ENCODE measurements at regions of chr7 and their contacts with region 1.

Region 1: GRCh38 chr7:44787041-44787440 is 9.4 kb upstream of the PPIA start:
- DNase-seq: no peak
- H3K4me3 ChIP-seq: no peak overlapping the region
- H3K27ac ChIP-seq: no peak overlapping the region
- H3K4me1 ChIP-seq: no peaks in the 10 kb centered on the region
- H3K27me3 ChIP-seq: no peaks in the 10 kb centered on the region
- CTCF ChIP-seq: no peak
- EP300 ChIP-seq: no peak
- POLR2A ChIP-seq: no peak

Region 2: GRCh38 chr7:44735403-44736165 is 51.5 kb before region 1 on chr7:
- in situ Hi-C with region 1: no loop called
- intact Hi-C with region 1: loop called (anchors 10 kb)
- DNase-seq: no peak
- H3K4me3 ChIP-seq: no peak overlapping the region
- H3K27ac ChIP-seq: no peak overlapping the region
- H3K4me1 ChIP-seq: no peaks in the 10 kb centered on the region
- H3K27me3 ChIP-seq: no peaks in the 10 kb centered on the region
- CTCF ChIP-seq: no peak
- EP300 ChIP-seq: no peak
- POLR2A ChIP-seq: no peak